PC-3 (cell line): ENCODE measurements at regions of chr2 and their contacts with region 1.

Region 1: GRCh38 chr2:81901011-81901410 is 1596.5 kb upstream of the LRRTM1 start:
- DNase-seq: peak; percentile 54
- ATAC-seq: no peak
- H3K4me3 ChIP-seq: no peak overlapping the region
- H3K27ac ChIP-seq: no peak overlapping the region
- H3K4me1 ChIP-seq: 0 out of 2 replicates have a peak, but pooled peaks cover under 1% of the 10 kb centered on the region
- H3K27me3 ChIP-seq: no peaks in the 10 kb centered on the region
- CTCF ChIP-seq: peak; percentile 63

Region 2: GRCh38 chr2:81937944-81938343 is 36.9 kb after region 1 on chr2:
- CTCF ChIA-PET with region 1: no interaction called
- POLR2A ChIA-PET with region 1: no interaction called
- intact Hi-C with region 1: no loop called
- DNase-seq: peak; percentile 18
- ATAC-seq: peak; percentile 48
- H3K4me3 ChIP-seq: no peak overlapping the region
- H3K27ac ChIP-seq: no peak overlapping the region
- H3K4me1 ChIP-seq: no peaks in the 10 kb centered on the region
- H3K27me3 ChIP-seq: no peaks in the 10 kb centered on the region
- CTCF ChIP-seq: no peak

Region 3: GRCh38 chr2:82023710-82024109 is 122.7 kb after region 1 on chr2:
- CTCF ChIA-PET with region 1: no interaction called
- POLR2A ChIA-PET with region 1: no interaction called
- intact Hi-C with region 1: loop called (anchors 5 kb)
- DNase-seq: peak; percentile 42
- ATAC-seq: no peak
- H3K4me3 ChIP-seq: no peak overlapping the region
- H3K27ac ChIP-seq: no peak overlapping the region
- H3K4me1 ChIP-seq: no peaks in the 10 kb centered on the region
- H3K27me3 ChIP-seq: no peaks in the 10 kb centered on the region
- CTCF ChIP-seq: peak; percentile 61

Region 4: DNA sequence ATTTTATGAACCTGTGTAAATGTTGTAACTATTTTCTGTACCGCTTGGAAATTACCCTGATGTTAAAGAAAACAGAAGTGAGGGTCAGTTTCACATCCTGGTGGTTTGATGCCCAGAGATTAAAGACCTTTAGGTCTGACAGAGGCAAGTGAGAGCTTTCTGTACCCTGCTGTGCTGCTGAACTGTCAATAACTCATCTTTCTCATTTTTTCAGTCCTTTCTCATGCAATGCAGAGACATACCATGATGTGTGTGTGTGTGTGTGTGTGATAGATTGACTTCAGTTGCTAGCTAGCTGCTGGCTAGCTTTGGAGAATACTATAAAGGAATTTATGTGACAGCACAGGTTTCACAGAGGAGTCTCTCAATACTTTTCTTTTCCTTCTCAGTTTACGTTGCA is 429.1 kb after region 1 on chr2:
- CTCF ChIA-PET with region 1: no interaction called
- POLR2A ChIA-PET with region 1: no interaction called
- intact Hi-C with region 1: loop called (anchors 10 kb)
- DNase-seq: no peak
- ATAC-seq: no peak
- H3K4me3 ChIP-seq: no peak overlapping the region
- H3K27ac ChIP-seq: no peak overlapping the region
- H3K4me1 ChIP-seq: no peaks in the 10 kb centered on the region
- H3K27me3 ChIP-seq: no peaks in the 10 kb centered on the region
- CTCF ChIP-seq: no peak

Region 5: DNA sequence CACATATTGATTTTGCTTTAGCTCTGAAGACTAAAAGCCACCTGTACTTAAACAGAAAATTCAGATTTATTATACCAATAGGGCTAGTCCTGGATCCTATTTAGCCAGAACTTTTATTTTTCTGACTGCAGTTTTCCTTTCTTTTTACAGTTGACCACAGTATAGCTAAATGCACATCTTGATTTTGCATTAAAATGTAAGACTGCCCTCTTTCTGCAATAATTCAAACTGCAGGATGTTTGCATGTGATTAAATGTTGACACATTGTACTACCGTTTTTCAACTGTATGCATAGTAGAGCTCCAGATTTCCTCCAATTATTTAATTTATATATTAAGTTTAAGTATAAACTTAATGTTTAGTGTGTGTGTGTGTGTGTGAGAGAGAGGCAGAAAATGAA is 1295.2 kb after region 1 on chr2:
- CTCF ChIA-PET with region 1: no interaction called
- POLR2A ChIA-PET with region 1: no interaction called
- intact Hi-C with region 1: loop called (anchors 5 kb)
- DNase-seq: peak; percentile 73
- ATAC-seq: peak; percentile 93
- H3K4me3 ChIP-seq: no peak overlapping the region
- H3K27ac ChIP-seq: no peak overlapping the region
- H3K4me1 ChIP-seq: no peaks in the 10 kb centered on the region
- H3K27me3 ChIP-seq: no peaks in the 10 kb centered on the region
- CTCF ChIP-seq: peak; percentile 78